Right cardiac atrium (tissue), 5 donors: ENCODE measurements at regions of chr14 and their contacts with region 1.

Region 1: DNA sequence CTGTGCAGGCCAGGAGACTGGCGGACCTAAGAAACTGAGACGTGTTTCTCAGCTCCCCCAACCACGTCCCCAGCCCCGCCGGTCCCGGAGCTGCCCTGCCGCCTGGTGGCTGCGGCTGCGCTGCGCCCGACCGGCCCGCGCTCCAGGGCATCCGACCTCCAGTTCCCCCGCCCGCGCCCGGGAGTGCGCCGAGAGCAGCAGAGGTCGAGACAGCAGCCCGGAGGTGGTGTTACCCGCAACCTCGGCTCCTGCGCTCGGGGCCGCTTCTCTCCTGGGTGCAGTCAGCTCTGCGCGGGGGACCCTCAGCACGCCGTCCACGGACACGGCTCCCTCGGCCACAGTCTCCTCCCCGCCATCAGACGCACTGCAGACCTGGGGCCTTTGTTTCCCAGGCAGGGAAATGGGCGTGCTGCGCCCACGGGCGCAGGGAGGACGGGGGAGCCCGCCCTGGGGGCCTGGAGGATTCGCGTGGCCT is 21.6 kb upstream of the GPR132 start:
- DNase-seq: peak; percentile 78 to 94 (median 92)
- ATAC-seq: peak; percentile 62 to 66
- H3K4me3 ChIP-seq: peak overlapping the region; percentile 34
- H3K27ac ChIP-seq: no peak overlapping the region
- H3K4me1 ChIP-seq: no peaks in the 10 kb centered on the region
- H3K27me3 ChIP-seq: no peaks in the 10 kb centered on the region

Region 2: DNA sequence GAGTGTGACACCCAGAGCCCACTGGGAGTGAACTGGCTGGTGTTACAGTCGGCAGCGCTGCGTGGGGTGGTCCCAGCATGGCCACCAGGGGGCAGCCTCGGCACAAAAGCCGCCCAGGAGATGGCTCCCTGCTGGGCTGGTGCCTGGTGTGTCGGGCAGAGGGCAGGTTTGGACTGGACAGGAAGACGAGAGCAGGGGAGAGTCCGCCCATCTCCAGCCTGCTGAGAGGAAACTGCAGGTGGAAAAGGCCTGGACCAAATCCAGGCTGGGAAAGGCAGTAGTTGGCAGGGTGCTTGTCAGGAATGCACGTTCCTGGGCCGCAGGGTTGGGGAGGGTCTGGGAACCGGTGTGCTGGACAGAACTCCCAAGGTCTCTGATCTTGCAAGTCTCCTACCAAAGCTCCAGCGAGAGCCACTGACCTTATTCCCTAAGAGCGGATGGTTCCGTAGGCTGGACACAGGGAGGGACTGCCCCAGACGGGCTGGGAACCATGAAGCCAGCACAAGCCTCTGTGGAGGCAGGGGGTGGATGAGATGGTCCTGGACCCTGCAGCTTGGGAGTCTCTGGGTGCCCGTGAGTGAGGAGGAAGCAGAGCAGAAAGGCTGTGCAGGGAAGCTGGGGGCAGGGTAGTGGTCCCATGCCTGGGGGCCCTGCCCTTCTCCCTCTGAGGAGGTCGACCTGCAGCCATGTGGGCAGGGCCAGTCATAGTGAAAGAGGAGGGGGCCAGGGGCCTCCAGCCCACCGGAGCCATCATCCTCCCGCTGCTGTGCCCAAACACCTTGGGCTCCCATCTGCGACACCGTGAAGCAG is 110.5 kb before region 1 on chr14:
- intact Hi-C with region 1: loop called in 1 of 4 experiments (anchors 2 kb)
- DNase-seq: peak; percentile 84 to 94 (median 92)
- ATAC-seq: peak; percentile 38 to 49
- H3K4me3 ChIP-seq: no peak overlapping the region
- H3K27ac ChIP-seq: no peak overlapping the region
- H3K4me1 ChIP-seq: peaks cover 10% of the 10 kb centered on the region
- H3K27me3 ChIP-seq: no peaks in the 10 kb centered on the region

Region 3: DNA sequence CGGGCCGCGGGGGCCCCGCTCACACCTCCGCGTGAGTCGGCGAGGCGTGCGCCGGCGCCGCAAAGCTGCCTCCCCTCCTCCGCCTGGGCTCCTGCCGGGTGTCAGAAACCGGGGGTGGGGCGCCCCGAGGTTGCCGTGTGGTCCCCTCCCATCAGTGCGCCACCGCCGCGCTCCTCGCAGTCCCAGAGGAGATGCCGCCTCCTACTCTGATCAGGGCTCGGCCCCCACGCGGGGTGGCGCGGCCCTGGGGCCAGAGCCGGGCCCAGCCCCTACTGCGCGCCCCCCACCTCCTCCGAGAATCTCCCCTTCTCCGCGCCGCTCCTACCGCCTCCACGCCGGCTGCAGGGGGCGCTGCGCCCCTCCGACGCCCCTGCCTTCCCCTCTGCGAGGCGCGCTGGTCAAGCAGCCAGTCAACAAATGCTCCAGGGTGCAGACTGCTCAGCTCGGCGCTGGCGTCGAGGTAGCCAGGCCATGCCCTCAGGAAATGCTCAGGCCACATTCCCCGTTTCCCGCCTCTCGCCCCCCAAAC is 82.2 kb after region 1 on chr14:
- intact Hi-C with region 1: loop called in 2 of 4 experiments (anchors 5 kb)
- DNase-seq: no peak
- ATAC-seq: peak; percentile 22 to 23
- H3K4me3 ChIP-seq: peak overlapping the region; percentile 67
- H3K27ac ChIP-seq: no peak overlapping the region
- H3K4me1 ChIP-seq: peaks cover 3% of the 10 kb centered on the region
- H3K27me3 ChIP-seq: no peaks in the 10 kb centered on the region

Region 4: DNA sequence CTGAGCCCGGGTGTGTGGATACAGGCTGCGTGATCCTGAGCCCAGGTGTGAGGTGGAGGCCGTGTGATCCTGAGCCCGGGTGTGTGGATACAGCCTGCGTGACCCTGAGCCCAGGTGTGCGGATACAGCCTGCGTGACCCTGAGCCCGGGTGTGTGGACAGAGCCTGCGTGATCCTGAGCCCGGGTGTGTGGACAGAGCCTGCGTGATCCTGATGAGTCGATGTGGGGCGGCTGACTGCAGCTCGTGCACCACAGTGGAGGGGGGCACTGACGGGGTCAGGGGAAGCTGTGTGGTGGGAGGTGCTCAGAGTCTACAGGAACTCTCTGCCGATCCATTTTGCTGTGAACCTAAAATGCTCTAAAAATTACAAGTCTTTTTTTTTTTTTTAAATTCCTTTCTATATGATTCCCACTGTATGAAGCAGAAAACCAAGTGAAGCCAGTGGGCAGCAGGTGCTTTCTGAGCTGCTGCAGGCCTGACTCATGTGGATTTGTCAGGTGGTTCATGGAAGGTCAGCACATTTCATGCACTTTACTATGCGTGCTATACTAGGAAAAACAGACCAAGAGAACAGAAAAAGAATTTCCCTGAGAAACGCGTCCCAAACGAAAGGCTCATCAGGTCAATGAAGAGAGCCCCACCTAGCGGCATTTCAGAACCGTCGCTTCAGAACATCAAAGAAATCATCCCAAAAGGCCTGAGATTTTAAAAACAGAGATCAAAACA is 194.7 kb after region 1 on chr14:
- intact Hi-C with region 1: loop called in 1 of 4 experiments (anchors 10 kb)
- DNase-seq: no peak
- ATAC-seq: no peak
- H3K4me3 ChIP-seq: no peak overlapping the region
- H3K27ac ChIP-seq: no peak overlapping the region
- H3K4me1 ChIP-seq: no peaks in the 10 kb centered on the region
- H3K27me3 ChIP-seq: no peaks in the 10 kb centered on the region

Region 5: GRCh38 chr14:105351920-105352851 is 265.3 kb after region 1 on chr14:
- intact Hi-C with region 1: loop called in 1 of 4 experiments (anchors 5 kb)
- DNase-seq: peak; percentile 83 to 89 (median 88)
- ATAC-seq: peak; percentile 83 to 85
- H3K4me3 ChIP-seq: no peak overlapping the region
- H3K27ac ChIP-seq: no peak overlapping the region
- H3K4me1 ChIP-seq: no peaks in the 10 kb centered on the region
- H3K27me3 ChIP-seq: no peaks in the 10 kb centered on the region